Activated CD4-positive, alpha-beta T cell treated with anti-CD3 and anti-CD28 coated beads for 36 hours (primary cell): ENCODE measurements at regions of chr7 and their contacts with region 1.

Region 1: GRCh38 chr7:23357190-23358093 is 58.3 kb downstream of the MALSU1 start:
- DNase-seq: no peak
- ATAC-seq: peak; percentile 42
- H3K4me3 Mint-ChIP-seq: no peak overlapping the region
- H3K27ac Mint-ChIP-seq: no peak overlapping the region
- H3K4me1 Mint-ChIP-seq: peaks cover 18% of the 10 kb centered on the region
- H3K27me3 Mint-ChIP-seq: peaks cover 7% of the 10 kb centered on the region

Region 2: DNA sequence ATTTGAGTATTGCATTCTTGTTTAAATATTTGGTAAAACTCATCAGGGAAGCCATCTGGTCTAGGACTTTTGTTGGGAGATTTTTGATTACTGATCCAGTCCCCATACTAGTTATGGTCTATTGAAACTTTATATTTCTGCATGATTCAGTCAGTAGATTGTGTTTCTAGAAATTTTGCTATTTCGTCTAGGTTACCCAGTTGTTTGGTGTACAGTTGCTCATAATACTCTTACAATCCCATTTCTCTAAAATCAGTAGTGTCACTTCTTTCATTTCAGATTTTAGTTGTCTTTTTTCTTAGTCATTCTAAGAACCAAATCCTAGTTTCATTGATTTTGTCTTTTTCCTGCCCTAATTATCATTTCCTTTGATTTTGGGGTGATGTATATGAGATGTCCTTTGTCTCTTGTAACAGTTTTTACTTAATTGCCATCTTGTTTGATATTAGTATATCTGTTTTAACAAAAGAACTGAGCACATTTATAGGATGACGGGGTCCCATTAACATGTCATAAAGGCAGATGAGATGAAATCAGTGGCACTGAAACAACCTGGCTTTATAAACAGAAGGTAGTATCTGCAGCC is 50.4 kb before region 1 on chr7:
- CTCF ChIA-PET with region 1: interaction called, 3 read pairs
- POLR2A ChIA-PET with region 1: interaction called, 3 read pairs
- intact Hi-C with region 1: loop called (anchors 1 kb)
- DNase-seq: no peak
- ATAC-seq: peak; percentile 85
- H3K4me3 Mint-ChIP-seq: no peak overlapping the region
- H3K27ac Mint-ChIP-seq: peak overlapping the region; percentile 56
- H3K4me1 Mint-ChIP-seq: peaks cover 47% of the 10 kb centered on the region
- H3K27me3 Mint-ChIP-seq: no peaks in the 10 kb centered on the region

Region 3: DNA sequence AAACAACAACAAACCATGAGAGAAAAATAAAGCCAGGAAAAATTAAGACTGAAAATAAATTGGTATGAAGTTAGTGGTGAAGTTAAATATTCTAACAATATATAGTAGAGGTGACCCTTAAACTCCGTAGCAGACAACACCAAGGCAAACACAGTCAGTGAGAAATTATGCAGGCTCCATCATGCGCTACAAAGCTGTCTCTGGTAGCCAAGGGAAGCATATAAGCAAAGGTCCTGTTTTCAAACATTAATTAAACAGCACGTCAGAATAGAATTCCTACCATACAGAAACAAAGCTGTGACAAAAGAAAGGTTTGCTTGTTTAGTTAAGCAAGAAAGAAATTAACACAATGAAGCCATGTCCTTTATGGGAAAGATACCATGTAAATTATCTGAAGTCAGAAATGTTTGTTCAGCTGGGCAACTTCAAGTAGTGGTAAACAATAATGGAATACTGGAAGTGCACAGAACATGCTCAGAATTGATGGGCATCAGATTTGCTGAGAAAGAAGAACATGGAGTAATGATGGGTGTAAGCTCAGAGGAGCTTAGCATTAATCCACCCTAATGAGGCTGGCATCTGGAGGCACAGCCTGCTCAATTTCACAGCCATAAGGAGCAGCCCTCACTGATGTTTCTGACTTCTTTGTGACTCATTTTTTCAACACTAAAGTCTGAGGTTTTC is 37.2 kb after region 1 on chr7:
- CTCF ChIA-PET with region 1: interaction called, 16 read pairs
- POLR2A ChIA-PET with region 1: no interaction called
- intact Hi-C with region 1: loop called (anchors 1 kb)
- DNase-seq: no peak
- ATAC-seq: no peak
- H3K4me3 Mint-ChIP-seq: no peak overlapping the region
- H3K27ac Mint-ChIP-seq: no peak overlapping the region
- H3K4me1 Mint-ChIP-seq: peaks cover 28% of the 10 kb centered on the region
- H3K27me3 Mint-ChIP-seq: peaks cover 6% of the 10 kb centered on the region

Region 4: GRCh38 chr7:23404546-23405239 is 47.3 kb after region 1 on chr7:
- CTCF ChIA-PET with region 1: interaction called, 5 read pairs
- POLR2A ChIA-PET with region 1: no interaction called
- intact Hi-C with region 1: loop called (anchors 1 to 2 kb)
- DNase-seq: peak; percentile 46
- ATAC-seq: peak; percentile 90
- H3K4me3 Mint-ChIP-seq: no peak overlapping the region
- H3K27ac Mint-ChIP-seq: peak overlapping the region; percentile 85
- H3K4me1 Mint-ChIP-seq: peaks cover 28% of the 10 kb centered on the region
- H3K27me3 Mint-ChIP-seq: no peaks in the 10 kb centered on the region

Region 5: DNA sequence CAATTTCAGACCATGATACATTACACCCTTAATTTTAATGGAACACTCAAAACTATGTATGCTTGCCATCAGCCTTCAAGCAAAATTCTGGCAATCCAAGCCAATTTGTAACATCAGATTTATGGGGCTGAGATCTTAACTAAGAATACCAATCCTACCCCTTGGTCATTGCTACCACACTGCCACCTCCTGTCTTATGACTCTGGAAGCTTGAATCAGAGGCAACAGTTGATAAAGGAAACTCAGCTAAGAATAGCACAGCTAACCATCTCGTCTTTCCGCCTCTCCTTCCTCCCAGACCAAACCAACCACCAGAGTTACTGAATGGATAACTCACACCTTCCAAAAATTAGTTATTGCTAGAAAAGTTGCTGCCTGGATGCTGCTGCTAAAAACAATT is 105.4 kb after region 1 on chr7:
- CTCF ChIA-PET with region 1: interaction called, 16 read pairs
- POLR2A ChIA-PET with region 1: no interaction called
- intact Hi-C with region 1: loop called (anchors 1 to 2 kb)
- DNase-seq: peak; percentile 36
- ATAC-seq: peak; percentile 61
- H3K4me3 Mint-ChIP-seq: no peak overlapping the region
- H3K27ac Mint-ChIP-seq: no peak overlapping the region
- H3K4me1 Mint-ChIP-seq: peaks cover 5% of the 10 kb centered on the region
- H3K27me3 Mint-ChIP-seq: peaks cover 61% of the 10 kb centered on the region

Region 6: GRCh38 chr7:23607130-23607529 is 249.7 kb after region 1 on chr7:
- CTCF ChIA-PET with region 1: no interaction called
- POLR2A ChIA-PET with region 1: no interaction called
- intact Hi-C with region 1: no loop called
- DNase-seq: no peak
- ATAC-seq: no peak
- H3K4me3 Mint-ChIP-seq: no peak overlapping the region
- H3K27ac Mint-ChIP-seq: no peak overlapping the region
- H3K4me1 Mint-ChIP-seq: peaks cover 15% of the 10 kb centered on the region
- H3K27me3 Mint-ChIP-seq: no peaks in the 10 kb centered on the region